Naive thymus-derived CD8-positive, alpha-beta T cell (primary cell): ENCODE measurements at regions of chr10 and their contacts with region 1.

Region 1: DNA sequence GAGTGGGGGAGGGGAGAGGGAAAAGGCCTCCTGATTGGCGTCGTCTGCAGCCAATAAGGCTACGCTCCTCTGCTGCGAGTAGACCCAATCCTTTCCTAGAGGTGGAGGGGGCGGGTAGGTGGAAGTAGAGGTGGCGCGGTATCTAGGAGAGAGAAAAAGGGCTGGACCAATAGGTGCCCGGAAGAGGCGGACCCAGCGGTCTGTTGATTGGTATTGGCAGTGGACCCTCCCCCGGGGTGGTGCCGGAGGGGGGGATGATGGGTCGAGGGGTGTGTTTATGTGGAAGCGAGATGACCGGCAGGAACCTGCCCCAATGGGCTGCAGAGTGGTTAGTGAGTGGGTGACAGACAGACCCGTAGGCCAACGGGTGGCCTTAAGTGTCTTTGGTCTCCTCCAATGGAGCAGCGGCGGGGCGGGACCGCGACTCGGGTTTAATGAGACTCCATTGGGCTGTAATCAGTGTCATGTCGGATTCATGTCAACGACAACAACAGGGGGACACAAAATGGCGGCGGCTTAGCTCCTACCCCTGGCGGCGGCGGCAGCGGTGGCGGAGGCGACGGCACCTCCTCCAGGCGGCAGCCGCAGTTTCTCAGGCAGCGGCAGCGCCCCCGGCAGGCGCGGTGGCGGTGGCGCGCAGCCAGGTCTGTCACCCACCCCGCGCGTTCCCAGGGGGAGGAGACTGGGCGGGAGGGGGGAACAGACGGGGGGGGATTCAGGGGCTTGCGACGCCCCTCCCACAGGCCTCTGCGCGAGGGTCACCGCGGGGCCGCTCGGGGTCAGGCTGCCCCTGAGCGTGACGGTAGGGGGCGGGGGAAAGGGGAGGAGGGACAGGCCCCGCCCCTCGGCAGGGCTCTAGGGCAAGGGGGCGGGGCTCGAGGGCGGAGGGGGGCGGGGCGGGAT is at the start of gene KAT6B:
- DNase-seq: peak; percentile 97 to 100 (median 100)
- ATAC-seq: peak; percentile 81 to 82
- H3K4me3 Mint-ChIP-seq: peak within 1 kb of the TSS; percentile 84 to 97 (median 91)
- H3K27ac Mint-ChIP-seq: peak within 1 kb of the TSS; percentile 92 to 99 (median 97)
- H3K4me1 Mint-ChIP-seq: peaks cover 35 to 75% (median 68%) of the 10 kb centered on the region in 4 donors
- H3K27me3 Mint-ChIP-seq: no peaks in the 10 kb centered on the region
- polyA plus RNA-seq, gene KAT6B: 19.0 to 29.3 (median 26.2) TPM

Region 2: GRCh38 chr10:74585231-74586087 is 240.9 kb before region 1 on chr10:
- POLR2A ChIA-PET with region 1: interaction called, 17 read pairs
- DNase-seq: peak in 9 of 10 donors; percentile 4 to 70 (median 48)
- ATAC-seq: peak; percentile 37 to 45
- H3K4me3 Mint-ChIP-seq: peak overlapping the region; percentile 73 to 90 (median 80)
- H3K27ac Mint-ChIP-seq: peak overlapping the region; percentile 94 to 100 (median 96)
- H3K4me1 Mint-ChIP-seq: peaks cover 30 to 70% (median 64%) of the 10 kb centered on the region in 4 donors
- H3K27me3 Mint-ChIP-seq: no peaks in the 10 kb centered on the region

Region 3: GRCh38 chr10:74750848-74751274 is 75.5 kb before region 1 on chr10:
- POLR2A ChIA-PET with region 1: interaction called, 14 read pairs
- DNase-seq: peak in 9 of 10 donors; percentile 23 to 68 (median 56)
- ATAC-seq: peak; percentile 93 to 95
- H3K4me3 Mint-ChIP-seq: peak overlapping the region in 8 of 10 donors; percentile 7 to 62 (median 48)
- H3K27ac Mint-ChIP-seq: peak overlapping the region in 6 of 10 donors; percentile 19 to 75 (median 52)
- H3K4me1 Mint-ChIP-seq: peaks cover 6 to 14% (median 11%) of the 10 kb centered on the region in 4 donors
- H3K27me3 Mint-ChIP-seq: no peaks in the 10 kb centered on the region

Region 4: GRCh38 chr10:74786088-74786487 is 40.3 kb before region 1 on chr10:
- POLR2A ChIA-PET with region 1: no interaction called
- DNase-seq: no peak
- ATAC-seq: no peak
- H3K4me3 Mint-ChIP-seq: no peak overlapping the region
- H3K27ac Mint-ChIP-seq: no peak overlapping the region
- H3K4me1 Mint-ChIP-seq: no peaks in the 10 kb centered on the region
- H3K27me3 Mint-ChIP-seq: no peaks in the 10 kb centered on the region